ENCODE measurements at regions of chr9 and their contacts with region 1.

Region 1: DNA sequence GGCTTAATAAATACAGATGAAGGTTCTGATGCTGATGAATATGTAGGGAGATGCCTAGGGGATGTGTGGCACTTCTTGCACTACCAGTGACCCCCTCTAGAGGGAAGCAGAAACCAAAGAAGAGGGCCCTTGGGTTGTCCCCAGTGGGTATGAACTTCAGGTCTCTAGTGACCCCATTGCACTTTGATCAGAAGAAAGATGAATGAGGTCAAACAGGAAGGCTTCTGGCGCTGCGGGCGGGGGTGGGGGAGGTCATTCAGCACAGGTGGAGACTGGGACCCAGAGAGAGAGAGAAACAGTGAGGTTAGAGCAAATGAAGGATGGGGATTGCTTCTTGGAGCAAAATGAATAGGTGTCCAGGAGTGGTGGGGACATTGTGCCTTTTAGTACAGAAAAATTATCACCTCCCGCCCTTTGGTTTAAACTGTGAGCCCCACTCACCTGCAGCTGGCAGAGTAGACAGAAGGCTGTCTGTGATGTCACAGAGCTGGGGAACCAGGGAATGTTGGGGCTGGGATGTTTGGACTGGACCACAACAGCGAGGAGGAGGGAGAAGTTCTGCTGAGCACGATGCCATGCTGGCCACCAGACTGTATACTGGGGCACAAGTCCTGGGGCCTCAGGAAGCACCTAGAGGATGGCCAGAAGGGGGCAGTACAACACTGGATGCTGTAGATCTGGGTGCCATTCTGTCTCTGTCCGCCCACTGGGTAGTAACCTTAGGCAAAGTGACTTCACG is at the start of gene TEX48:
- DNase-seq: peak; percentile 82
- H3K4me3 ChIP-seq: no peak within 1 kb of the TSS
- H3K27ac ChIP-seq: no peak within 1 kb of the TSS
- H3K4me1 ChIP-seq: no peaks in the 10 kb centered on the region
- H3K27me3 ChIP-seq: no peaks in the 10 kb centered on the region
- CTCF ChIP-seq: peak; percentile 59
- total RNA-seq, gene TEX48: not detected

Region 2: DNA sequence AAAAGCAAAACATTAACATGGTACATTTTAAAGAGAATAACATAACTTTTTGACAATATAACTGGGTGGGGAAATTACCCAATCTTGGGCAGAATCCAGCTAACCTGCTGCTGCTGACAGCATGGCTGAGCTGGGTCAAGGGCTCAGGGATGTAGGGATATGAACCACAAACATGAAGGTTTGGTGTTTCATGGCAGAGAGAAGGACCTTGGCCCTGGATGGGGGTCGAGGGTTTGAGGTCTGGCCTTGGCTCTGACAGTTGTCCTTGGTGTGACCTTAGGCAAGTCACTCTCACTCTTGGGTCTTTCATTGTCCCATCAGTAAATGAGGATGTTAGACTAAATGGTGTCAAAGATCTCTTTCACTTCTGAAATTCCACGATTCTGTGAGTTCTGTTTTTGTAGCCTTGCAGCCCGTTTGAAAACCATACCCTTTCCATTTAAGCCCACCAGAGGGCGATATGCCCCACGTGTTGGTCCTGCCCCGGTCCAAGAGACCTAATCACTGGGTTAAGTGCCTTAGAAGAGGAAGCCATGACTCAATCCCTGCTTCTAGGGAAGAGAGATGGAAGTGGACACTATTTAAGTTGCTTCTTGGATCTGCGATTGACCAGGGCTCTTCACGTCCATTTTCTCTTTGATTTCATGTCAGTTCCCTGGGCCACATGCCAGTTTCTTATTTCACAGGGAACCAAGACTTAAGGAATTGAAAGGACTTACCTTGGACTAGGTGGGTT is 57.0 kb after region 1 on chr9:
- intact Hi-C with region 1: loop called (anchors 5 kb)
- DNase-seq: peak; percentile 81
- H3K4me3 ChIP-seq: no peak overlapping the region
- H3K27ac ChIP-seq: no peak overlapping the region
- H3K4me1 ChIP-seq: no peaks in the 10 kb centered on the region
- H3K27me3 ChIP-seq: no peaks in the 10 kb centered on the region
- CTCF ChIP-seq: peak; percentile 86

Region 3: GRCh38 chr9:114852050-114852594 is 170.4 kb after region 1 on chr9:
- intact Hi-C with region 1: no loop called
- DNase-seq: peak; percentile 25
- H3K4me3 ChIP-seq: no peak overlapping the region
- H3K27ac ChIP-seq: no peak overlapping the region
- H3K4me1 ChIP-seq: peaks cover 2% of the 10 kb centered on the region
- H3K27me3 ChIP-seq: no peaks in the 10 kb centered on the region
- CTCF ChIP-seq: no peak

Region 4: GRCh38 chr9:114869845-114870244 is 188.1 kb after region 1 on chr9:
- intact Hi-C with region 1: no loop called
- DNase-seq: peak; percentile 78
- H3K4me3 ChIP-seq: no peak overlapping the region
- H3K27ac ChIP-seq: no peak overlapping the region
- H3K4me1 ChIP-seq: peaks cover 4% of the 10 kb centered on the region
- H3K27me3 ChIP-seq: no peaks in the 10 kb centered on the region
- CTCF ChIP-seq: no peak

Measured in colonic mucosa (tissue), 4 donors.